ENCODE measurements at regions of chr9 and their contacts with region 1.

Region 1: GRCh38 chr9:134585746-134586706 is 55.6 kb upstream of the COL5A1 start:
- DNase-seq: no peak
- H3K4me3 ChIP-seq: no peak overlapping the region
- CTCF ChIP-seq: peak; percentile 46

Region 2: GRCh38 chr9:134475011-134475790 is 110.8 kb before region 1 on chr9:
- in situ Hi-C with region 1: loop called (anchors 5 kb)
- DNase-seq: no peak
- H3K4me3 ChIP-seq: no peak overlapping the region
- CTCF ChIP-seq: no peak

Region 3: GRCh38 chr9:134637241-134637640 is 51.2 kb after region 1 on chr9:
- in situ Hi-C with region 1: loop called (anchors 5 kb)
- DNase-seq: no peak
- H3K4me3 ChIP-seq: no peak overlapping the region
- CTCF ChIP-seq: peak; percentile 46